ENCODE measurements at regions of chr1 and their contacts with region 1.

Region 1: GRCh38 chr1:174262349-174263241 is 103.3 kb downstream of the RABGAP1L start:
- DNase-seq: no peak
- ATAC-seq: peak; percentile 70
- H3K4me3 Mint-ChIP-seq: no peak overlapping the region
- H3K27ac Mint-ChIP-seq: no peak overlapping the region
- H3K4me1 Mint-ChIP-seq: peaks cover 25% of the 10 kb centered on the region
- H3K27me3 Mint-ChIP-seq: no peaks in the 10 kb centered on the region
- CTCF ChIP-seq: no peak

Region 2: DNA sequence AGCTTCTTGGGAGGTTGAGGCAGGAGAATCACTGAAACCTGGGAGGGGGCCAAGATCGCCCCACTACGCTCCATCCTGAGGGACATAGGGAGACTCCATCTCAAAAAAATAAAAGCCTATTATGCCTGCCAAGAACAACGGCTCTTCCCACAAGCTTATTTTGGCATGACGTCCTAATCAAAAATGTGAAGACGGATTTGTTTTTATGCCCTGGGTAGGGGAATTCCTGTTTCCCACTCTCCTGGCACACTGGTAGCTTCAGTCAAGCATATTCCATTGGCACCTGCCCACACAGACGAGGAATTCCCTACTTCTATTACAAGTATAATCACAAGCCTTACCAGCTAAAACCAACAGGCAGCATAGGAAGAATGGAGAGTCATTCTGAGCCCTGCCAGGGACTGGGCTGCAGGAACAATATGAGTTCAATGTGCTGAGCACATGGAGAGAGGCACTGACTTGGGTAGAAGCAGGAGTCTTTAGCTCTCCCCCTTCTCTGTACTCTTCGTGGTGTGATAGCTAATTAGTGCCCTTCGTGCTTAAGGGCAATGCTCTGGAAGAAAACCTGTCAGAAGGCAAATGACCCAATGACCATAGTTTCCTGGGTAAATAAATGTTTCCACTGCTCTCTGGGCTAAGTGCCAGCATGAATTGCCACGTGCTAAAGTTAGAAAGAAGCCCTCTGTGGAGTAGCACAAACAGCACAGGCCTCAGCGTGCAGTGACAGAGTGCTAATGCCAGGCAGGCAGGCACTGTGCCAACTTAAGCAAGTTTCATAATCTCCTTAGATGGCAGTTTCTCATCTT is 1072.3 kb before region 1 on chr1:
- CTCF ChIA-PET with region 1: no interaction called
- POLR2A ChIA-PET with region 1: no interaction called
- intact Hi-C with region 1: no loop called
- DNase-seq: no peak
- ATAC-seq: no peak
- H3K4me3 Mint-ChIP-seq: no peak overlapping the region
- H3K27ac Mint-ChIP-seq: no peak overlapping the region
- H3K4me1 Mint-ChIP-seq: peaks cover 27% of the 10 kb centered on the region
- H3K27me3 Mint-ChIP-seq: no peaks in the 10 kb centered on the region
- CTCF ChIP-seq: no peak

Region 3: GRCh38 chr1:174276087-174276486 is 13.5 kb after region 1 on chr1:
- CTCF ChIA-PET with region 1: interaction called, 42 read pairs
- POLR2A ChIA-PET with region 1: no interaction called
- intact Hi-C with region 1: loop called (anchors 2 kb)
- DNase-seq: no peak
- ATAC-seq: peak; percentile 50
- H3K4me3 Mint-ChIP-seq: no peak overlapping the region
- H3K27ac Mint-ChIP-seq: no peak overlapping the region
- H3K4me1 Mint-ChIP-seq: peaks cover 46% of the 10 kb centered on the region
- H3K27me3 Mint-ChIP-seq: no peaks in the 10 kb centered on the region
- CTCF ChIP-seq: no peak

Region 4: GRCh38 chr1:174726167-174726879 is 463.7 kb after region 1 on chr1:
- CTCF ChIA-PET with region 1: interaction called, 44 read pairs
- POLR2A ChIA-PET with region 1: no interaction called
- intact Hi-C with region 1: loop called (anchors 1 kb)
- DNase-seq: no peak
- ATAC-seq: no peak
- H3K4me3 Mint-ChIP-seq: no peak overlapping the region
- H3K27ac Mint-ChIP-seq: no peak overlapping the region
- H3K4me1 Mint-ChIP-seq: peaks cover 4% of the 10 kb centered on the region
- H3K27me3 Mint-ChIP-seq: no peaks in the 10 kb centered on the region
- CTCF ChIP-seq: no peak

Region 5: GRCh38 chr1:175129997-175130648 is 867.5 kb after region 1 on chr1:
- CTCF ChIA-PET with region 1: interaction called, 6 read pairs
- POLR2A ChIA-PET with region 1: no interaction called
- intact Hi-C with region 1: loop called (anchors 5 kb)
- DNase-seq: no peak
- ATAC-seq: no peak
- H3K4me3 Mint-ChIP-seq: no peak overlapping the region
- H3K27ac Mint-ChIP-seq: no peak overlapping the region
- H3K4me1 Mint-ChIP-seq: peaks cover 6% of the 10 kb centered on the region
- H3K27me3 Mint-ChIP-seq: peaks cover 5% of the 10 kb centered on the region
- CTCF ChIP-seq: no peak